Activated B cell treated with CpG ODN at 0.5 μM for 24 hours (primary cell): ENCODE measurements at regions of chr3 and their contacts with region 1.

Region 1: GRCh38 chr3:169149349-169149890 is 514.1 kb downstream of the MECOM start:
- DNase-seq: peak; percentile 58
- ATAC-seq: peak; percentile 95
- H3K4me3 Mint-ChIP-seq: peak overlapping the region; percentile 53
- H3K27ac Mint-ChIP-seq: no peak overlapping the region
- H3K4me1 Mint-ChIP-seq: peaks cover 23% of the 10 kb centered on the region
- H3K27me3 Mint-ChIP-seq: peaks cover 49% of the 10 kb centered on the region
- CTCF ChIP-seq: no peak

Region 2: GRCh38 chr3:168865022-168865551 is 284.3 kb before region 1 on chr3:
- CTCF ChIA-PET with region 1: no interaction called
- POLR2A ChIA-PET with region 1: no interaction called
- intact Hi-C with region 1: loop called (anchors 10 kb)
- DNase-seq: no peak
- ATAC-seq: no peak
- H3K4me3 Mint-ChIP-seq: no peak overlapping the region
- H3K27ac Mint-ChIP-seq: no peak overlapping the region
- H3K4me1 Mint-ChIP-seq: no peaks in the 10 kb centered on the region
- H3K27me3 Mint-ChIP-seq: no peaks in the 10 kb centered on the region
- CTCF ChIP-seq: no peak

Region 3: GRCh38 chr3:170037463-170038433 is 888.3 kb after region 1 on chr3 and contains the start of gene GPR160:
- CTCF ChIA-PET with region 1: no interaction called
- POLR2A ChIA-PET with region 1: no interaction called
- intact Hi-C with region 1: loop called (anchors 5 kb)
- DNase-seq: peak; percentile 88
- ATAC-seq: peak; percentile 77
- H3K4me3 Mint-ChIP-seq: peak within 1 kb of the TSS; percentile 93
- H3K27ac Mint-ChIP-seq: peak within 1 kb of the TSS; percentile 88
- H3K4me1 Mint-ChIP-seq: peaks cover 46% of the 10 kb centered on the region
- H3K27me3 Mint-ChIP-seq: no peaks in the 10 kb centered on the region
- CTCF ChIP-seq: peak; percentile 52
- total RNA-seq, gene GPR160: 63.2 and 65.5 TPM in 2 replicates

Region 4: GRCh38 chr3:170811928-170812591 is 1662.6 kb after region 1 on chr3:
- CTCF ChIA-PET with region 1: no interaction called
- POLR2A ChIA-PET with region 1: no interaction called
- intact Hi-C with region 1: loop called (anchors 5 kb)
- DNase-seq: peak; percentile 30
- ATAC-seq: peak; percentile 97
- H3K4me3 Mint-ChIP-seq: no peak overlapping the region
- H3K27ac Mint-ChIP-seq: no peak overlapping the region
- H3K4me1 Mint-ChIP-seq: no peaks in the 10 kb centered on the region
- H3K27me3 Mint-ChIP-seq: no peaks in the 10 kb centered on the region
- CTCF ChIP-seq: peak; percentile 84